GM12878 (cell line): ENCODE measurements at regions of chr3 and their contacts with region 1.

Region 1: DNA sequence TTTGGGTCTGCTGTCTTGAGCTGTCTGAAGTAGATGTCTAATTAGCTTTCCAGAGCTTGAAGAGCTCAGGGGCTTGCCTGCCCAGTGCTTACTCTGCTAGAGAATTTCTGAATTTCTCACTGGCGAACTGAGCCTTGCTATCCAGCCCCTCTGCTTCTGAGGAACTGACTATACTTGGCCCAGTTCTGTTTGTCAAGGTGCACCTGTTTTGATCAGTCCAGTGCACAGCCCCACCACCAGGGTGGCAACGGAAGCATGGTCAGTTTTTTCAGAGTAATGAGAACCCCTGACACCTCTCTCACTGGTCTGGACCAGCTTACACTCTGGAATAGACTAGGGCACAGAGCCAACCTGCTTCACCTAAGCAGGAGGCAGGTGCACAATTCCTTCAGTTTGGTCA is 25.2 kb downstream of the ITGB5 start:
- DNase-seq: no peak
- ATAC-seq: peak; percentile 36; the same call in 2 of the 3 replicates
- H3K4me3 ChIP-seq: no peak overlapping the region
- H3K27ac ChIP-seq: no peak overlapping the region
- H3K4me1 ChIP-seq: no peaks in the 10 kb centered on the region
- H3K27me3 ChIP-seq: peaks cover 0 to 2% of the 10 kb centered on the region in 2 experiments; a peak in 3 of 4 replicates
- CTCF ChIP-seq: no peak
- EP300 ChIP-seq: no peak
- POLR2A ChIP-seq: no peak
- RAD21 ChIP-seq: no peak

Region 2: GRCh38 chr3:124895756-124896155 is 33.8 kb after region 1 on chr3:
- CTCF ChIA-PET with region 1: interaction called, 7 read pairs
- POLR2A ChIA-PET with region 1: interaction called, 10 read pairs
- RAD21 ChIA-PET with region 1: interaction called, 3 read pairs
- SMC1A ChIA-PET with region 1: interaction called, 4 read pairs
- in situ Hi-C with region 1: no loop called
- intact Hi-C with region 1: no loop called
- DNase-seq: no peak
- ATAC-seq: no peak
- H3K4me3 ChIP-seq: no peak overlapping the region
- H3K27ac ChIP-seq: no peak overlapping the region
- H3K4me1 ChIP-seq: no peaks in the 10 kb centered on the region; the same call in 1 of the 2 replicates
- H3K27me3 ChIP-seq: no peaks in the 10 kb centered on the region
- CTCF ChIP-seq: no peak
- EP300 ChIP-seq: no peak
- POLR2A ChIP-seq: no peak
- RAD21 ChIP-seq: no peak

Region 3: GRCh38 chr3:125003369-125003853 is 141.4 kb after region 1 on chr3:
- CTCF ChIA-PET with region 1: no interaction called
- POLR2A ChIA-PET with region 1: no interaction called
- RAD21 ChIA-PET with region 1: no interaction called
- SMC1A ChIA-PET with region 1: no interaction called
- in situ Hi-C with region 1: no loop called
- intact Hi-C with region 1: no loop called
- DNase-seq: no peak
- ATAC-seq: no peak
- H3K4me3 ChIP-seq: no peak overlapping the region
- H3K27ac ChIP-seq: no peak overlapping the region
- H3K4me1 ChIP-seq: no peaks in the 10 kb centered on the region
- H3K27me3 ChIP-seq: no peaks in the 10 kb centered on the region
- CTCF ChIP-seq: no peak
- EP300 ChIP-seq: no peak
- POLR2A ChIP-seq: no peak
- RAD21 ChIP-seq: no peak